HEK293 (cell line): ENCODE measurements at regions of chr17 and their contacts with region 1.

Region 1: GRCh38 chr17:41648411-41649195 is 24.2 kb upstream of the KRT17 start:
- H3K4me3 ChIP-seq: peak overlapping the region; percentile 42
- H3K27ac ChIP-seq: no peak overlapping the region; the same call in 1 of the 2 replicates
- H3K4me1 ChIP-seq: no peaks in the 10 kb centered on the region
- CTCF ChIP-seq: peak; percentile 93

Region 2: GRCh38 chr17:40854159-40854814 is 794.3 kb before region 1 on chr17:
- CTCF ChIA-PET with region 1: interaction called, 17 read pairs
- POLR2A ChIA-PET with region 1: no interaction called
- H3K4me3 ChIP-seq: no peak overlapping the region
- H3K27ac ChIP-seq: no peak overlapping the region
- H3K4me1 ChIP-seq: peaks cover 5% of the 10 kb centered on the region
- CTCF ChIP-seq: no peak

Region 3: GRCh38 chr17:41322094-41322902 is 326.3 kb before region 1 on chr17:
- CTCF ChIA-PET with region 1: interaction called, 21 read pairs
- POLR2A ChIA-PET with region 1: no interaction called
- H3K4me3 ChIP-seq: no peak overlapping the region
- H3K27ac ChIP-seq: no peak overlapping the region
- H3K4me1 ChIP-seq: no peaks in the 10 kb centered on the region
- CTCF ChIP-seq: no peak; the same call in 1 of the 2 replicates

Region 4: GRCh38 chr17:41530062-41531051 is 118.2 kb before region 1 on chr17:
- CTCF ChIA-PET with region 1: interaction called, 12 read pairs
- POLR2A ChIA-PET with region 1: interaction called, 6 read pairs
- H3K4me3 ChIP-seq: no peak overlapping the region
- H3K27ac ChIP-seq: peak overlapping the region; percentile 32
- H3K4me1 ChIP-seq: peaks cover 14% of the 10 kb centered on the region
- CTCF ChIP-seq: no peak

Region 5: GRCh38 chr17:41579484-41580243 is 68.9 kb before region 1 on chr17:
- CTCF ChIA-PET with region 1: interaction called, 63 read pairs
- POLR2A ChIA-PET with region 1: interaction called, 6 read pairs
- H3K4me3 ChIP-seq: no peak overlapping the region
- H3K27ac ChIP-seq: no peak overlapping the region
- H3K4me1 ChIP-seq: no peaks in the 10 kb centered on the region; the same call in 1 of the 2 replicates
- CTCF ChIP-seq: peak; percentile 89

Region 6: GRCh38 chr17:41635121-41636097 is 13.2 kb before region 1 on chr17:
- CTCF ChIA-PET with region 1: interaction called, 23 read pairs
- POLR2A ChIA-PET with region 1: no interaction called
- H3K4me3 ChIP-seq: no peak overlapping the region
- H3K27ac ChIP-seq: no peak overlapping the region
- H3K4me1 ChIP-seq: no peaks in the 10 kb centered on the region
- CTCF ChIP-seq: no peak

Region 7: GRCh38 chr17:41824086-41824485 is 175.5 kb after region 1 on chr17:
- CTCF ChIA-PET with region 1: no interaction called
- POLR2A ChIA-PET with region 1: no interaction called
- H3K4me3 ChIP-seq: no peak overlapping the region
- H3K27ac ChIP-seq: no peak overlapping the region
- H3K4me1 ChIP-seq: no peaks in the 10 kb centered on the region
- CTCF ChIP-seq: no peak